ENCODE measurements at regions of chr11 and their contacts with region 1.

Region 1: GRCh38 chr11:48034926-48035871 is 54.8 kb downstream of the PTPRJ start:
- DNase-seq: peak; percentile 93 to 97
- ATAC-seq: peak; percentile 87 to 90
- H3K4me3 ChIP-seq: no peak overlapping the region
- H3K27ac ChIP-seq: peak overlapping the region; percentile 80 to 88 (median 84)
- H3K4me1 ChIP-seq: peaks cover 21 to 76% of the 10 kb centered on the region in 2 donors
- H3K27me3 ChIP-seq: no peaks in the 10 kb centered on the region
- CTCF ChIP-seq: no peak
- POLR2A ChIP-seq: peak in 1 of 2 donors; percentile 18

Region 2: DNA sequence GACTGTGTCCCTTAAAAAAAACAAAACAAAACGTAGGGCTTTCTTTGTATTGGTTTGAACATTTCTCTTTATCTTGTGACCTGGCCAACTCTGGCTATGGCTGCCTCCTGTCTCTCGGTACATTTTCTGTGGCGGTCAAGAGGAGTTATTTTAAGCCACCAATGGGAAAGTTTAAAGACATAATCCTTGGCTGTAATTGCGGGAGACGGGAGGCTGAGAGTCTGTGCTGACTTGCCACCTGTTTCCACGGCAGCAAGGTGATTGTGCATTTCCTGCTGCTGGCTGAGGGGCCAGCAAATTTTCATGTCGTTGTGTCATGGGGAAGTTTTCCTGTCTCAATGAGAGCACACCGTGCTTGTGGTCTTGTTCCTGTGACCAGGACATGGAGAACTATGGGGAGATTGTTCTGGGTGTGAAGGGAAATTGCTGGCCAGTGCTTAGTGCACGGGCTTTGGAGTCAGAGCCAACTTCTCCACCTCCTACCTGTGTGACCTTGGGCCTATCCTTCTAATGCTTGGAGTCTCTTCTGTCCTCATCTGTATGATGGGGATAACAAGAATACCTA is 43.9 kb before region 1 on chr11:
- in situ Hi-C with region 1: loop called in 1 of 4 experiments (anchors 5 kb)
- intact Hi-C with region 1: loop called (anchors 2 kb)
- DNase-seq: peak; percentile 65 to 87
- ATAC-seq: peak; percentile 87 to 89
- H3K4me3 ChIP-seq: peak overlapping the region; percentile 2 to 28 (median 13)
- H3K27ac ChIP-seq: peak overlapping the region; percentile 75 to 95 (median 87)
- H3K4me1 ChIP-seq: peaks cover 11 to 26% of the 10 kb centered on the region in 2 donors
- H3K27me3 ChIP-seq: no peaks in the 10 kb centered on the region
- CTCF ChIP-seq: no peak
- POLR2A ChIP-seq: peak; percentile 32

Region 3: DNA sequence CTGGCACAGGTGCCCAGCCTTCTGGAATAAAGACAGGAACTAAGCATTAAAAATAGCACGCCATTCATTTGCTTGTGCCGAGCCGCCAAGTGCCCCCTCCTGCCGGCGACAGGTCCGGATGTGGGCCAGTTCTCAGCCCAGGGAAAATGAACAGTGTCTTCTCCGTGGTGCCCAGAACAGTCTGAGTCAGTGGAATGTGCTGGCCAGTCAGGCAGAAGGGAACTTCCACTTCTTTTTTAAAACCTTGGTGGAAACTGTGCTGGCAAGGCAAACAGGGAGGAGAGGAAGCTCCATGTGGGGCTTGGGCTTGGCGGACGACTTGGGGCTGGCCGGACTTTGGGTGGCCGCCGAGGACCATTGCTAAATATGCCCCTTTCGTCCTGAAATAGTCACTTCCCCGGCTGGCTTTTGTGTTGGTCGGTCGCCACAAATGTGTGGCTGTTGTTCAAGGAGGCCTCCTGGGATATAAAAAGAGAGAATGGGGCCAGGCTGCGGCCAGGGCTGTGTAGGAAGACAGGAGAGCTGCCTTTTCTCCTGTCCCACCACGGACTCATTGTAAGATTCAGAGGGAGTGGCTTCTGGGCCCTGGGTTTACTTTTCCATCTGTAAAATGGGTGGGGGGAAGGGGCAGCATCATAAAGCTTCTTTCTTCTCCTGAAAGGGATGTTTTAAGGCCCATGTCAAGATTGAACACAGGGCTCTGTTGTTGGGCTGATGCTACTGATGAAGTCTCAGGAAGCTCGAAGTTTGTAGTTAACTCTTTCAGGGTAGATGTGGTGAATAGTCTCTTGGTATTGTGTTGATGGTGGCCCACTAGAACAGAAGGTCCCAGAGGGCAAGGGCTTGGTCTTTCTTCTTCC is 46.2 kb after region 1 on chr11:
- in situ Hi-C with region 1: loop called in 1 of 4 experiments (anchors 10 kb)
- intact Hi-C with region 1: loop called (anchors 1 kb)
- DNase-seq: peak; percentile 86 to 92
- ATAC-seq: peak; percentile 93 to 95
- H3K4me3 ChIP-seq: peak overlapping the region; percentile 29 to 37 (median 34)
- H3K27ac ChIP-seq: peak overlapping the region; percentile 84 to 93 (median 88)
- H3K4me1 ChIP-seq: peaks cover 10 to 27% of the 10 kb centered on the region in 2 donors
- H3K27me3 ChIP-seq: no peaks in the 10 kb centered on the region
- CTCF ChIP-seq: no peak
- POLR2A ChIP-seq: peak in 1 of 2 donors; percentile 23

Region 4: GRCh38 chr11:48150213-48150612 is 115.0 kb after region 1 on chr11:
- in situ Hi-C with region 1: no loop called
- intact Hi-C with region 1: no loop called
- DNase-seq: no peak
- ATAC-seq: no peak
- H3K4me3 ChIP-seq: no peak overlapping the region
- H3K27ac ChIP-seq: no peak overlapping the region
- H3K4me1 ChIP-seq: no peaks in the 10 kb centered on the region
- H3K27me3 ChIP-seq: no peaks in the 10 kb centered on the region
- CTCF ChIP-seq: no peak
- POLR2A ChIP-seq: no peak

Measured in gastrocnemius medialis (tissue), 4 donors.